Dendritic cell treated with granulocyte-macrophage colony-stimulating factor and Interleukin-4, amounts not matched to agents 40 ng/mL and 50 ng/mL, for 4 days (primary cell): ENCODE measurements at regions of chr6 and their contacts with region 1.

Region 1: GRCh38 chr6:149316798-149317655 is 485 bp upstream of the TAB2 start:
- H3K4me3 Mint-ChIP-seq: peak overlapping the region; percentile 86
- H3K27ac Mint-ChIP-seq: peak overlapping the region; percentile 89
- H3K4me1 Mint-ChIP-seq: peaks cover 33% of the 10 kb centered on the region
- H3K27me3 Mint-ChIP-seq: no peaks in the 10 kb centered on the region

Region 2: GRCh38 chr6:149259753-149260152 is 57.3 kb before region 1 on chr6:
- intact Hi-C with region 1: loop called (anchors 5 kb)
- H3K4me3 Mint-ChIP-seq: no peak overlapping the region
- H3K27ac Mint-ChIP-seq: peak overlapping the region; percentile 93
- H3K4me1 Mint-ChIP-seq: peaks cover 57% of the 10 kb centered on the region
- H3K27me3 Mint-ChIP-seq: no peaks in the 10 kb centered on the region

Region 3: GRCh38 chr6:149551920-149552319 is 234.9 kb after region 1 on chr6:
- intact Hi-C with region 1: no loop called
- H3K4me3 Mint-ChIP-seq: no peak overlapping the region
- H3K27ac Mint-ChIP-seq: no peak overlapping the region
- H3K4me1 Mint-ChIP-seq: peaks cover 5% of the 10 kb centered on the region
- H3K27me3 Mint-ChIP-seq: peaks cover 34% of the 10 kb centered on the region